CD4-positive, alpha-beta memory T cell (primary cell): ENCODE measurements at regions of chrX and their contacts with region 1.

Region 1: GRCh38 chrX:69222103-69223090 is 57.1 kb upstream of the PJA1 start:
- DNase-seq: peak; percentile 60 to 69 (median 66)
- H3K4me3 ChIP-seq: no peak overlapping the region
- H3K4me3 Mint-ChIP-seq: no peak overlapping the region
- H3K27ac ChIP-seq: no peak overlapping the region
- H3K27ac Mint-ChIP-seq: no peak overlapping the region
- H3K4me1 ChIP-seq: no peaks in the 10 kb centered on the region
- H3K4me1 Mint-ChIP-seq: no peaks in the 10 kb centered on the region
- H3K27me3 ChIP-seq: no peaks in the 10 kb centered on the region
- H3K27me3 Mint-ChIP-seq: peaks cover 0 to 1% of the 10 kb centered on the region in 2 donors

Region 2: DNA sequence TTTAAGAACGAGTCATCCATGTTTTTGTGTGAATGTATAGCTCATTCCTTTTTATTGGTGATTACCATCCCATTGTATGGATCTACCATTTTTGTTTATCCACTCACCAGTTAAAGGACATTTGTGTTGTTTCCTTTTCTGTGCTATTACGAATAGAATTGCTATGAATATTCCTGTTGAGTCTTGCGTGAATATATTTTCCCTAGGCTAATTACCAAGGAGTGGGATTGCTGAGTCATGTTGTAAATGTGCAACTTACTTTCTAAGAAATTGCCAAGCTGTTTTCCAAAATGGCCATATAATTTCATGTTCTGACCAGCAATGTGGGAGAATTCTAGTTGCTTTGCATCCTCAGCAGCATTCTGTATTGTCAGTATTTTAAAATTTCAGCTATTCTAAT is 672.2 kb before region 1 on chrX:
- CTCF ChIA-PET with region 1: no interaction called
- POLR2A ChIA-PET with region 1: no interaction called
- intact Hi-C with region 1: no loop called
- DNase-seq: no peak
- H3K4me3 ChIP-seq: no peak overlapping the region
- H3K4me3 Mint-ChIP-seq: no peak overlapping the region
- H3K27ac ChIP-seq: no peak overlapping the region
- H3K27ac Mint-ChIP-seq: no peak overlapping the region
- H3K4me1 ChIP-seq: no peaks in the 10 kb centered on the region
- H3K4me1 Mint-ChIP-seq: no peaks in the 10 kb centered on the region
- H3K27me3 ChIP-seq: no peaks in the 10 kb centered on the region
- H3K27me3 Mint-ChIP-seq: no peaks in the 10 kb centered on the region

Region 3: GRCh38 chrX:68732906-68733493 is 489.4 kb before region 1 on chrX:
- CTCF ChIA-PET with region 1: interaction called, 4 read pairs
- POLR2A ChIA-PET with region 1: no interaction called
- intact Hi-C with region 1: loop called (anchors 1 kb)
- DNase-seq: peak; percentile 50 to 60 (median 57)
- H3K4me3 ChIP-seq: no peak overlapping the region
- H3K4me3 Mint-ChIP-seq: no peak overlapping the region
- H3K27ac ChIP-seq: no peak overlapping the region
- H3K27ac Mint-ChIP-seq: peak overlapping the region in 1 of 7 donors; percentile 57
- H3K4me1 ChIP-seq: no peaks in the 10 kb centered on the region
- H3K4me1 Mint-ChIP-seq: peaks cover 0 to 2% (median 0%) of the 10 kb centered on the region in 4 donors
- H3K27me3 ChIP-seq: no peaks in the 10 kb centered on the region
- H3K27me3 Mint-ChIP-seq: peaks cover 4% of the 10 kb centered on the region in 2 donors

Region 4: DNA sequence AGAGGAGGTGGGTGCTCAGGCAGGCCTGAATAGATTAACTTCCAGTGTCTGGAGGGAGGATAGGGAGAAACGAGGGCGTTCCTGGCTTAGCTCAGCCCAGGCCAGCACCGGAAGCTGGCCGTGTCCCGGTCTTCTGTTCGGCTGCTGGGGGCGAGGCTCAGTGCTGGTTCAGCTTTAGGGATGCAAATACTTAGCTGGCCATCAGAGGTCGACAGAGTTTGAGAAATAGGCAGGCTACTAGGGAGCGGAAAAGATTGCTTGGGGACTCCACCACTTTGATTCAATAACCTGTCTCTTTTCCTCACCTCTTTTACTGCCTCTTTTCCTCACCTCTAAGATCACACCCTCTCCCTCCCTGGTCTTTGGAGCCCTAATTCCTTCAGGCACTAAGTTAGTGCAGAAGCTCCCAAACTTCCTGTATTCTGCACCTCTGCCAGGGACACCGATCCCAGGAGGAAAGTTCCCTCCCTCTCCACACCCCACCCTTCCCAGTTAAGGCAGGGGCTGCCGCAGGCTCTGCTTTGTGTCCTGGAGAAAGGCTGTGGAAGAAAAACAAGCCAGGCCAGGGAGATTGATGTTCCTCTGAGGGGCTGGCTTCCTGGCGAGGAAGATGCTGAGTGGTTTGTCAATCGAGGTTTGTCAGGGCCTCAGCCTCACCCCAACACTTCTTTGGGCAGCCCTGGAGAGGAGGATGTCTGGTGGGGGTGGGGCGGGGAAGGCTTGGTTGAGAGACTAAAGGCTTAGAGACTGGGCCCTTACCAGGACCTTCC is 399.6 kb before region 1 on chrX:
- CTCF ChIA-PET with region 1: interaction called, 135 read pairs
- POLR2A ChIA-PET with region 1: interaction called, 6 read pairs
- intact Hi-C with region 1: loop called (anchors 1 kb)
- DNase-seq: peak in 1 of 5 donors; percentile 21
- H3K4me3 ChIP-seq: no peak overlapping the region
- H3K4me3 Mint-ChIP-seq: peak overlapping the region in 1 of 8 donors; percentile 9
- H3K27ac ChIP-seq: no peak overlapping the region
- H3K27ac Mint-ChIP-seq: no peak overlapping the region
- H3K4me1 ChIP-seq: no peaks in the 10 kb centered on the region
- H3K4me1 Mint-ChIP-seq: peaks cover 0 to 4% (median 3%) of the 10 kb centered on the region in 4 donors
- H3K27me3 ChIP-seq: no peaks in the 10 kb centered on the region
- H3K27me3 Mint-ChIP-seq: no peaks in the 10 kb centered on the region

Region 5: GRCh38 chrX:69158166-69158980 is 64.0 kb before region 1 on chrX:
- CTCF ChIA-PET with region 1: interaction called, 8 read pairs
- POLR2A ChIA-PET with region 1: no interaction called
- intact Hi-C with region 1: loop called (anchors 1 kb)
- DNase-seq: peak in 3 of 5 donors; percentile 14 to 28 (median 16)
- H3K4me3 ChIP-seq: no peak overlapping the region
- H3K4me3 Mint-ChIP-seq: no peak overlapping the region
- H3K27ac ChIP-seq: no peak overlapping the region
- H3K27ac Mint-ChIP-seq: no peak overlapping the region
- H3K4me1 ChIP-seq: peaks cover 13% of the 10 kb centered on the region
- H3K4me1 Mint-ChIP-seq: peaks cover 11 to 23% (median 21%) of the 10 kb centered on the region in 4 donors
- H3K27me3 ChIP-seq: no peaks in the 10 kb centered on the region
- H3K27me3 Mint-ChIP-seq: no peaks in the 10 kb centered on the region

Region 6: GRCh38 chrX:69203591-69203990 is 18.8 kb before region 1 on chrX:
- CTCF ChIA-PET with region 1: no interaction called
- POLR2A ChIA-PET with region 1: no interaction called
- intact Hi-C with region 1: no loop called
- DNase-seq: no peak
- H3K4me3 ChIP-seq: no peak overlapping the region
- H3K4me3 Mint-ChIP-seq: no peak overlapping the region
- H3K27ac ChIP-seq: no peak overlapping the region
- H3K27ac Mint-ChIP-seq: no peak overlapping the region
- H3K4me1 ChIP-seq: no peaks in the 10 kb centered on the region
- H3K4me1 Mint-ChIP-seq: no peaks in the 10 kb centered on the region
- H3K27me3 ChIP-seq: no peaks in the 10 kb centered on the region
- H3K27me3 Mint-ChIP-seq: no peaks in the 10 kb centered on the region

Region 7: GRCh38 chrX:69374569-69374968 is 152.2 kb after region 1 on chrX:
- CTCF ChIA-PET with region 1: no interaction called
- POLR2A ChIA-PET with region 1: no interaction called
- intact Hi-C with region 1: no loop called
- DNase-seq: no peak
- H3K4me3 ChIP-seq: no peak overlapping the region
- H3K4me3 Mint-ChIP-seq: no peak overlapping the region
- H3K27ac ChIP-seq: no peak overlapping the region
- H3K27ac Mint-ChIP-seq: no peak overlapping the region
- H3K4me1 ChIP-seq: no peaks in the 10 kb centered on the region
- H3K4me1 Mint-ChIP-seq: no peaks in the 10 kb centered on the region
- H3K27me3 ChIP-seq: no peaks in the 10 kb centered on the region
- H3K27me3 Mint-ChIP-seq: peaks cover 0 to 2% of the 10 kb centered on the region in 2 donors